ENCODE measurements at regions of chr20 and their contacts with region 1.

Region 1: GRCh38 chr20:59222253-59223181 is 58.9 kb downstream of the ZNF831 start:
- DNase-seq: peak; percentile 76 to 86 (median 84)
- ATAC-seq: peak; percentile 100
- H3K4me3 ChIP-seq: peak overlapping the region; percentile 10; the same call in 1 of the 2 replicates
- H3K27ac ChIP-seq: no peak overlapping the region
- H3K4me1 ChIP-seq: peaks cover 0 to 9% of the 10 kb centered on the region in 2 experiments; a peak in 2 of 5 replicates
- H3K27me3 ChIP-seq: peaks cover 29 to 40% of the 10 kb centered on the region in 2 experiments
- CTCF ChIP-seq: peak; percentile 88 to 92 (median 91)
- EP300 ChIP-seq: no peak
- POLR2A ChIP-seq: no peak
- RAD21 ChIP-seq: peak; percentile 76 to 83

Region 2: DNA sequence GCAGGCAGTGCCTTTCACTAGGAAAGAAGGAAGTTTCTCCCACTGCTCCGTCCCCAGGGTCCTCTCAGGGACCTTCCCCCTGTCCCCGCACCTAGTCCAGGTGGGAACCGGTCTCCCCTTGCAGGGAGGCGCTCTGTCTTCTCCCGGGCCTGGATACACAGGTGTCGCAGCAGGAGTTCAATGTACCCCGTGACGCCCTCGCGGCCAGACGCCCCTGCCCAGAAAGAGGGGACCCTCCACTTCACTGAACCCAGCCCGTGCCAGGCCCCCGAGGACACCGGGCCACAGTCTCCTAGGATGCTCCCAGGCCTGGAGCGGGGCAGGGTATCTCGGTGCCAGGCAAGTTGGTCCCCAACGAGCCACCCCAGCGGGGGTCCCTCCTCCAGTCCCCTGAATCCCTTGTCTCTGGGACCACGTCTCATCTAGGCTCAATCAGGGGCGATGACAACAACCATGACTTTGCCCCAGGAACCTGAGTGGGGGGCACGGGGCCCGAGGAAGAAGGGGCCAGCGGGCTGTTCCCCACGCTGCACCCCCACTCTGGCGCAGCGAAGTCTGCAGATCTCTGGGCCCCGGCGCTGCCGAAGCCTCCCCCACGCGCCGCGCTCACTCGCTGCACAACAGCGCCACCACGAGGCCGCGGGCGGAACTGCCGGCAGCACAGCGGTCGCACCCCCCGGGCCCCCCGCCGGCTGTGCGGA is 180.9 kb after region 1 on chr20:
- CTCF ChIA-PET with region 1: no interaction called
- POLR2A ChIA-PET with region 1: no interaction called
- in situ Hi-C with region 1: no loop called
- intact Hi-C with region 1: loop called (anchors 5 kb)
- DNase-seq: peak; percentile 59 to 96 (median 92)
- ATAC-seq: peak; percentile 97
- H3K4me3 ChIP-seq: no peak overlapping the region
- H3K27ac ChIP-seq: no peak overlapping the region
- H3K4me1 ChIP-seq: peaks cover 0 to 9% of the 10 kb centered on the region in 2 experiments; a peak in 2 of 5 replicates
- H3K27me3 ChIP-seq: peaks cover 12 to 57% of the 10 kb centered on the region in 2 experiments; a peak in 4 of 5 replicates
- CTCF ChIP-seq: peak; percentile 87 to 91 (median 87)
- EP300 ChIP-seq: no peak
- POLR2A ChIP-seq: no peak
- RAD21 ChIP-seq: peak; percentile 67 to 87

Measured in K562 (cell line).